Mammary epithelial cell (primary cell): ENCODE measurements at regions of chr6 and their contacts with region 1.

Region 1: DNA sequence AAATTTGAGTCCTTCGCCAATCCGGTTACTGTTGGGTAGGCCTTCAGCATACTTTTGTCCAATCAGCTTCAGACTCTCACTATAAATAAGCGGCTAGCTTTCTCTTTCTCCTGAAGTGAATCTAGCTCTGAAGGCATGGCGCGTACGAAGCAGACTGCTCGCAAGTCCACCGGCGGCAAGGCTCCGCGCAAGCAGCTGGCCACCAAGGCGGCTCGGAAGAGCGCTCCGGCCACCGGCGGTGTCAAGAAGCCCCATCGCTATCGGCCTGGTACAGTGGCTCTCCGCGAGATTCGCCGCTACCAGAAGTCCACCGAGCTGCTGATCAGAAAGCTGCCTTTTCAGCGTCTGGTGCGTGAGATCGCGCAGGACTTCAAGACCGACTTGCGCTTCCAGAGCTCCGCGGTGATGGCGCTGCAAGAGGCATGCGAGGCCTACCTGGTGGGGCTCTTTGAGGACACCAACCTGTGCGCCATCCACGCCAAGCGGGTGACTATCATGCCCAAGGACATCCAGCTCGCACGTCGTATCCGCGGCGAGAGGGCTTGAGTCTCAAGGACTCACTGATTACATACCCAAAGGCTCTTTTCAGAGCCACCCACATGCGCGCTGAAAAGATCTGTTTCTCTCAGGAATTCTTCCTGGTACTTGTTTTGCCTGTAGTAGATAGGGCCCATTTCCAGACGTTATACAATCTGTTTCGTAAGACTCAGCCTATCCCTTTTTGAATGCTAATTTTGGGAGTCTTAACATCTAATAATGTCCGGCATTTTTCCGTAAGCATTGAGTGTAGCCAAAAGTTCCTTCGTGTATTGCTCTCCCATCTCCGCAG is 102.0 kb downstream of the OR2B2 start:
- DNase-seq: peak; percentile 96
- H3K4me3 ChIP-seq: peak overlapping the region; percentile 58 to 85 (median 60)
- H3K27ac ChIP-seq: peak overlapping the region; percentile 77
- H3K4me1 ChIP-seq: peaks cover 18% of the 10 kb centered on the region
- H3K27me3 ChIP-seq: no peaks in the 10 kb centered on the region
- CTCF ChIP-seq: peak in 1 of 2 donors; percentile 25

Region 2: GRCh38 chr6:27146706-27147505 is 663.2 kb before region 1 on chr6:
- CTCF ChIA-PET with region 1: no interaction called
- dilution Hi-C with region 1: no loop called
- in situ Hi-C with region 1: no loop called
- intact Hi-C with region 1: loop called (anchors 2 kb)
- DNase-seq: peak; percentile 99
- H3K4me3 ChIP-seq: peak overlapping the region; percentile 44 to 79 (median 73)
- H3K27ac ChIP-seq: peak overlapping the region; percentile 79
- H3K4me1 ChIP-seq: peaks cover 5% of the 10 kb centered on the region
- H3K27me3 ChIP-seq: no peaks in the 10 kb centered on the region
- CTCF ChIP-seq: no peak

Region 3: GRCh38 chr6:27795697-27796494 is 14.3 kb before region 1 on chr6:
- CTCF ChIA-PET with region 1: interaction called, 3 read pairs
- dilution Hi-C with region 1: no loop called
- in situ Hi-C with region 1: no loop called
- intact Hi-C with region 1: loop called (anchors 1 kb)
- DNase-seq: peak; percentile 83
- H3K4me3 ChIP-seq: no peak overlapping the region
- H3K27ac ChIP-seq: no peak overlapping the region
- H3K4me1 ChIP-seq: peaks cover 8% of the 10 kb centered on the region
- H3K27me3 ChIP-seq: no peaks in the 10 kb centered on the region
- CTCF ChIP-seq: peak; percentile 74 to 87

Region 4: DNA sequence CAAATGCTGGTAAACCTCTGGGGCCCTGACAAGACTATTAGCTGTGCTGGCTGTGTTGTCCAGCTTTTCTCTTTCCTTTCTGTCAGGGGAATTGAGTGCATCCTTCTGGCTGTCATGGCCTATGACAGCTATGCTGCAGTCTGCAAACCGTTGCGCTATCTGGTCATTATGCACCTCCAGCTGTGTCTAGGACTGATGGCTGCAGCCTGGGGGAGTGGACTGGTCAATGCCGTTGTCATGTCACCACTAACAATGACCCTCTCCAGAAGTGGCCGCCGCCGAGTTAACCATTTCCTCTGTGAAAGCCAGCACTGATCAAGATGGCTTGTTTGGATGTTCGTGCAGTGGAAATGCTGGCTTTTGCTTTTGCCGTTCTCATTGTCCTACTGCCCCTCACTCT is 167.2 kb after region 1 on chr6:
- CTCF ChIA-PET with region 1: no interaction called
- dilution Hi-C with region 1: no loop called
- in situ Hi-C with region 1: no loop called
- intact Hi-C with region 1: no loop called
- DNase-seq: no peak
- H3K4me3 ChIP-seq: no peak overlapping the region
- H3K27ac ChIP-seq: no peak overlapping the region
- H3K4me1 ChIP-seq: no peaks in the 10 kb centered on the region
- H3K27me3 ChIP-seq: peaks cover 4% of the 10 kb centered on the region
- CTCF ChIP-seq: no peak

Region 5: DNA sequence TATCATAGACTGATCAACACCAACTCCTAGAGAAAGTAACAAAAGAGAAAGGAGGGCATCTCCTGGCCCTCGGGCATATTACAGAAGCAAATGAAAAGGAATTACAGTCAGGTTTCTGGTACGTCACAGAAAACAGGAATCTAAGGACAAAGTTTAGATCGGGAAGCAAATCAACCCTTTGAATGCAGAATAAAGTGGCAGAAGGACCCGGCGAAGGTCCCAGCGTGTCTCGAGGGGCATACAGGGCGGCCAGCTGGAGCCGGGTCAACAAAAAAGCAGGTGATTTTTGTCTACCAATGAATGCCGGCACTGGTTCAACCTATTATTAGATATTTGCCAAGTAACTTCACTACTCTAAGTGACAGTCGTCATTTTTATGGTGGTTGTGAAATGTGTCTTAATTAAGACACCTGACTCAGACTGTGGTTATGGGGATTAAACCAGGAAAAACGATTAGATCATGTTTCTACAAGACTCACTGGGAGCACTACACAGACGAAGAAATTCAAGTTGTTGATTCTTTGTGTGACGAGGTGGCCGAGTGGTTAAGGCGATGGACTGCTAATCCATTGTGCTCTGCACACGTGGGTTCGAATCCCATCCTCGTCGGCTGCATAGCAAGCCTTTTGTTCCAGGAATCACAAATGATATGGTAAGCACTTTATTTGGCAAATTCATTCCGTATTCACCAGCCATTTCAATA is 402.5 kb after region 1 on chr6:
- CTCF ChIA-PET with region 1: no interaction called
- dilution Hi-C with region 1: no loop called
- in situ Hi-C with region 1: no loop called
- intact Hi-C with region 1: loop called (anchors 5 kb)
- DNase-seq: peak; percentile 93
- H3K4me3 ChIP-seq: peak overlapping the region; percentile 61 to 62 (median 61)
- H3K27ac ChIP-seq: peak overlapping the region; percentile 77
- H3K4me1 ChIP-seq: peaks cover 19% of the 10 kb centered on the region
- H3K27me3 ChIP-seq: no peaks in the 10 kb centered on the region
- CTCF ChIP-seq: peak; percentile 13 to 28